ENCODE measurements at regions of chr1 and their contacts with region 1.

Region 1: DNA sequence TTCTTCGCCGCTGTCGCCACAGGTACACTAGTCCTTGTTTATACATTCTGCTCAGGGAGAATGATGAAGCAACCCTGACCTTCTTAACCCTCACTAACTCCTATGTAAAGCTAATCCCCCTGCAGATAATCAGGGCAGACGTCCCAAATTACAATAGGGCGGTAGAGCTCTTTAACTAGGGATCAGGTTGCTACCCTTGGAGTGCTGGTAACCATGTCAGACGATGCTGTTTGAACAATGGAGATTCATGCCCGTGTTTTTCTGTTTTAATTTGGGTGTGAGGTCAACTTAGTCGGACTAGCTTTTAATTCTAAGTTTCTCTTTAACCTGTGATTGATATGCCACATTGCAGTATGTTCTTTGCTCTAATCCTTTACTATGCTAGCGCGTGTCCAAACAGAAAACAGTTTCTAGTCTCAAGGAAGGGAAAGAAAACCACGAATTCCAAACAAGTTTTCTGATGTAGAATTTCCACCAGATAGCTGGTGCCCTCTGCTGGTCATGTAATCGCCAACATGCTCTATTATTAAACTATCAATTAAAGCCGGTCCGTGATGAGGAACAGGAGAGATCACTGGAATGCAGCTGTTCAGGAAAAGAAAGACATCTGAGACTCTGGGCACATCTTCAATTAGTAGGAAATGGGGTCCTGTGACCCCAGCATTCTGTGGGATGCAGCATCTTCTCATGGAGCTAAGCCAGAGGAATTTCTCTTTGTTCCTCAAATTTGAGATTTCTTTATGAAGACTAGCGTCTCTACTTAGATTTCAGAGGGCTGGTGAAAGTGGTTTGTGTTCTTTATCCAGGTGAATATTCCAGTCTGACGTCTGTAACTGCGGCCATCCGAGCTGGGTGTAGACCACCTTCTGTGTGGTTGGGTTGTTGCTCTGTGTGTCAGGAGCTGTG is 18.3 kb upstream of the VAMP3 start:
- DNase-seq: peak; percentile 53
- ATAC-seq: peak; percentile 68

Region 2: DNA sequence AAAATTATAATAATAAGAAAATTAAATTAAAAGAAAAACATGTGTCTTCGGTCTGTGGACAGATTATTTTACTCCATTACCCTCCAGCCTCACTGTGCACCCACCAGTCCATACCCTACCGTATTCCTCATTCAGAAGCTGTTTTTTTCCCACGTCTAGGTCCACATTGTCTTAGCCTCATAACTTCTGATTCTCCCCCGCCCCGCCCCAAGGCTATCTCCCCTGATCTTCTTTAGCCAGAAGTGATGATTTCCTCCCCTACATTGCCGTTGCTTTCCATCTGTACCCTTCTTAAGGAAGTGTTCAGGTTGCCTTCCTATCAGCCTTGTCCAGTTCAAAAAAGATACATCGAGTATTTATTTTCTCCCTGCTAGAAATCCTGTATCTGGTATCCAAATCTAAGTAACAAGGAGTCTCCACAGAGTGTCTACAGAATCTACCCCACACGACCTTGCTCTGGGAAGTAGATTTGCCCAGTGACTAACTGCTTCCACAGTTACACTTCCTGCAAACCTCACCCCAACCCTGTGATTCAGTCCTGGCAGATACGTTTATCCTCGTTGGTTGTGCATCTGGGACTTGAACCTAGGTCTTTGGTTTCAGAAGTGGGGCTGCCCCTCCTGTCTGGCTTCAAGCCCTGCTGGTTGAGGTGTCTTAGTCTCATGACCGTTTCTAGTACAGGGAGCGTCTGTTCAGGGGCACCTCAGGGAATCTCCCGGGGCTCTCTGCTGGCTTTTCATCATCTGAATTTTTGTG is 497.3 kb before region 1 on chr1:
- intact Hi-C with region 1: no loop called
- DNase-seq: no peak
- ATAC-seq: no peak

Region 3: DNA sequence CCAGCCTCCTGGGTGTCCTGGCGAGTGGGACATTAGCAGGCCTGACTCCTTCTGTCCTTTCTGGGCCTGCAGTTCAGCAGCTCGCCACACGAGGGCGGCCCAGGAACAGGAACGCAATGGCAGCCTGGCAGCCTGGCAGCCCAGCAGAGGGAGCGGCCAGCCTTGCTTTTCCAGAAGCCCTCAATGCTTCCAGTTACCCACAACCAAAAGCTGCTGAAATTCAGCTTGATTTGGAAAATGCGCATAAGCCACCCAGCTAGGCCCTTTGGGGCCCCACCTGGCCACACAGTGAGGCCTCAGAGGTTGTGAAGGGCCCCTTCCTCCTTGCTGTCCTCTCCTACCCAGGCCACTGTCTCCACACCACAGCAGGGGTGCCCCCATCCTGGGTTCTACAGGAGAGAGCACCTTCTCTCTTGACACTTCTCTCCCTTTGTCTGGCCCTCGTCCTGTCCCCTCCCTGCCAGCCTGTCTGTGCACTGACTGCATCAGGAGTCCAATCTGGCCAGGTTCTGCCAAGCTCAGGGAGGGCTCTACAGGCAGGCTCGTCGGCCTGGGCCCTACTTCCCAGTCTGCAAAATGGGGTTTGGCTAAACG is 85.0 kb before region 1 on chr1:
- intact Hi-C with region 1: loop called (anchors 2 kb)
- DNase-seq: peak; percentile 95
- ATAC-seq: peak; percentile 83

Measured in left ventricle myocardium superior (tissue), 1 donor.